Posterior vena cava (tissue), 2 donors: ENCODE measurements at regions of chr17 and their contacts with region 1.

Region 1: DNA sequence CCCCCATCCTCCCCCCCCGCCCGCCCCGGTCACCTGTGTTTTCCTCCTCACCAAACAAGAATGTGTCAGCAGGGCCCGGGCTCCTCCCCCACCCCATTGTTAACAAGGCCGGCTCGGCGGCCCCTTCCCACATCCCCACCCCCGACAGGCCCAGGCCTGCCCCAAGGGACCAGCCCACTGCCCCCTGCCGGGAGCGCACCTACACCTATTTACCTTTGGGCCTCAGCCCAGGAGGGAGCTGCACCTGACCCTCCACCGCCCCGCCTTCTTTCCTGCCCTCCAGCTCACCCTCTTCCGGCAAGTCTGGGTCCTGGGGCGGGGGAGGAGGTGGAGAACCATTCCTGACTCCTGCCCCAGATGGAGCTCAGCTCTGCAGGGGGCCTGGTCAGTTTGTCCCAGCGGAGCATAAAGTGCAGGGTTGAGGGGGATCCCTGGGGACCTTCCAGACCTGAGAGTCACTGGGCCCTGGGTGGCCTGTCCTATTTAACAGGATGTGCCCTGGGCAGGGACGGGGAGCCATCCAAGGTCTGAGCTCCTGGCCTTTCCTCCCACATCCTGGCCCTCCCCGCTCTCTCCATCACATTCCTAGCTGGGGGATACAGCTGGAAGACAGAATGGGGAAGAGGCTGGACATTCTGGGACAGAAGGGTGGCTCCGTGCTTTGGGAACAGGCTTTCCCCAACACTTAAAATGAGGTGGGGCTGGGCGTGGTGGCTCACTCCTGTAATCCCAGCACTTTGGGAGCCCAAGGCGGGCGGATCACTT is 8.3 kb downstream of the FOXJ1 start:
- DNase-seq: no peak

Region 2: GRCh38 chr17:76107509-76107908 is 25.2 kb before region 1 on chr17:
- intact Hi-C with region 1: no loop called
- DNase-seq: no peak

Region 3: DNA sequence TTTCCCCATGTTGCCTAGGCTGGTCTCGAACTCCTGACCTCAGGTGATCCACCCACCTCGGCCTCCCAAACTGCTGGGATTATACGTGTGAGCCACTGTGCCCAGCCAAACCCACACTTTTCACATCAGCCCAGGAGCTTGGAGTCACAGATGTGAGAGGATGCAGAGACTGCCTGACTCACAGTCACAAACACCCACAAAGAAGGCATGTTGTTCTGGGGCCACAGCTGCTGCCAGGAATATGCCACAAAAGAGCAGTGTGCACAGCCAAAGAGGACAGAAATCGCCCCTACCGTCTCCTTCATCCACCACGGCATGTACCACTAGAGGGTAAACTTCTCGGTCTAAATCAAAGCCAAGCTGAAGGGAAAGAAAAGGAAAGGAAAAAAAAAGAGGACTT is 33.4 kb after region 1 on chr17:
- intact Hi-C with region 1: no loop called
- DNase-seq: peak; percentile 48

Region 4: GRCh38 chr17:76179496-76180467 is 47.0 kb after region 1 on chr17:
- intact Hi-C with region 1: loop called in 1 of 2 experiments (anchors 5 kb)
- DNase-seq: no peak

Region 5: GRCh38 chr17:77829843-77830799 is 1697.4 kb after region 1 on chr17:
- intact Hi-C with region 1: no loop called
- DNase-seq: peak; percentile 92